Activated naive CD4-positive, alpha-beta T cell treated with anti-CD3 and anti-CD28 coated beads for 36 hours (primary cell): ENCODE measurements at regions of chr13 and their contacts with region 1.

Region 1: DNA sequence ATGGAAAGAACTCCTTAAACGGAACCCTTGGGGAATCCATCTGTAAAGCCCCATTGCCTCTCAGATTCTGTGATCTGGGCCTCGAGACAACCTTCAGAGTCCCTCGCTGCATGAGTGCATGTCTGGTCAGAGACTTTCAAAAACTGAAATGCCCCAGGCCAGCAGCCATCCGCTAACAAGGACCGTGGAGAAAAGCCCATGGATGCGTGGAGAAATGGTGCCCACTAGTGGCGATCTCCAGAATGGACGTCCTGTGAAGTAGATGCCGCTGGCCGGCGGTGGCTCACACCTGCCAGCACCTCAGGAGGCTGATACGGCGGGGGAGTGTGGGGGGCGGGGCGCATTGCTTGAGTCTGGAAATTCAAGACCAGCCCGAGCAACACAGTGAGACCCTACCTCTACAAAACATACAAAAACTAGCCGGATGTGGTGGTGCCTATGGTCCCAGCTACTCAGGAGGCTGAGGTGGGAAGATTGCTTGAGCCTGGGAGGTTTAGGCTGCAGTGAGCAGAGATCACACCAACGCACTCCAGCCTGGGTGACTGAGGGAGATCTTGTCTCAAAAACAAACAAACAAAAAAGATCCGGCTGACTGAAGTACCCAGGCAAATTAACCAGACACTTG is 7.9 kb upstream of the CDC16 start:
- DNase-seq: peak; percentile 95
- H3K4me3 Mint-ChIP-seq: peak overlapping the region; percentile 38
- H3K27ac Mint-ChIP-seq: peak overlapping the region; percentile 63
- H3K4me1 Mint-ChIP-seq: peaks cover 52% of the 10 kb centered on the region
- H3K27me3 Mint-ChIP-seq: no peaks in the 10 kb centered on the region

Region 2: DNA sequence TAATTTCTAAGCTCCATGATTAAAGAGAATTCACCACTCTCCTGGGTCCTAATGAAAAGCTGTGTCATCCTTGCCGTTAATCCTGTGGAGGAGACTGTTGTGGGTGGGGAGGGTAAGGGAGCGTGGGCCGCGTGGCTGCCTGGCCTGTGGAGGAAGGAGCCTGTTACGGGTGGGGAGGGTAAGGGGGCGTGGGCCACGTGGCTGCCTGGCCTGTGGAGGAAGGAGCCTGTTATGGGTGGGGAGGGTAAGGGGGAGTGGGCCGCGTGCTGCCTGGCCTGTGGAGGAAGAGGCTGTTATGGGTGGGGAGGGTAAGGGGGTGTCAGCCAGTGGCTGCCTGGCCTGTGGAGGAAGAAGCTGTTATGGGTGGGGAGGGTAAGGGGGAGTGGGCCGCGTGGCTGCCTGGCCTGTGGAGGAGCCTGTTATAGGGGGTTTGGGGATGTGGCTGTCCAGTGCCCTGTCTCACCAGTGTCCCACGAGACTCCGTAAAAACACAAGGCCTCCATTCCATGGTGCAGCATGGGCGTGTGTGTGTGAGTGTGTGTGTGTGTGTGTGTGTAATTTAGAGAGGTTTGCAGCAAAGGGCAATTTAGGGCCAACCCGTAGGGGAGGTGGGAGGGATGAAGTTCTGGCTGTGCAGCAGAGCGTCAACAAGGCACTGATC is 720.7 kb before region 1 on chr13:
- CTCF ChIA-PET with region 1: no interaction called
- intact Hi-C with region 1: no loop called
- DNase-seq: no peak
- H3K4me3 Mint-ChIP-seq: no peak overlapping the region
- H3K27ac Mint-ChIP-seq: no peak overlapping the region
- H3K4me1 Mint-ChIP-seq: no peaks in the 10 kb centered on the region
- H3K27me3 Mint-ChIP-seq: no peaks in the 10 kb centered on the region

Region 3: DNA sequence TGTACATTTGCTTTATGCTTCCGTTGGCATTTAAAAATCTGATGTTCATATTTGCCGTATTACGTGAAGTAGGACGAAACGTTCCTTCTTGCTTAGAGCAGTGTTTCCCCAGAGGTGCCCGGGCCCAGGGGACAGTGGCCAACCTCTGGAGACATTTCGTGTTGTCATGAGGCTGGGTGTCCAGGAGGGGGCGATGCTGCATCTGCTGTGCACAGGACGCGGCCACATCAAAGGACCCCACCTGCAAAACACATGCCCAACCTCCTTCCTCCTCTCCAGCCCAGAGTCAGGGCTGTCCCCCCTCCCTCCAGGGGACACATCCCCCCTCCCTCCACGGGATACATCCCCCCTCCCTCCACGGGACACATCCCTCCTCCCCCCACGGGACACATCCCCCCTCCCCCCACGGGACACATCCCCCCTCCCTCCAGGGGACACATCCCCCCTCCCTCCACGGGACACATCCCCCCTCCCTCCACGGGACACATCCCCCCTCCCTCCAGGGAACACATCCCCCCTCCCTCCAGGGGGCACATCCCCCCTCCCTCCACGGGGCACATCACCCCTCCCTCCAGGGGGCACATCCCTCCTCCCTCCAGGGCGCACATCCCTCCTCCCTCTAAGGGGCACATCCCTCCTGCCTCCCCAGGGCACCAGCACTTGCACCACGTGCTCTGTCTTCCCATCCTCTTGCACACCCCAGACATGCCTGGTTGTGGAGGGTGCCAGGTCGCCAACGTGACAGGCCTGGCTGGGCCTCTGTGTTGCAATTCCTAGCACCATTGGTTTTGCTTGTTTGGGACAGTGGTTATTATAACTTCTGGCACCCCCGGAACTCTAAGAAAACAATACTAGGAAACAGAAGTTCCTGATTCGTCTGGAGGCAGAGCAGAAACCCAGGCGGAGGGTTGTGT is 409.6 kb before region 1 on chr13:
- CTCF ChIA-PET with region 1: interaction called, 3 read pairs
- intact Hi-C with region 1: loop called (anchors 1 kb)
- DNase-seq: peak; percentile 94
- H3K4me3 Mint-ChIP-seq: peak overlapping the region; percentile 91
- H3K27ac Mint-ChIP-seq: no peak overlapping the region
- H3K4me1 Mint-ChIP-seq: peaks cover 21% of the 10 kb centered on the region
- H3K27me3 Mint-ChIP-seq: no peaks in the 10 kb centered on the region

Region 4: GRCh38 chr13:113951246-113951999 is 275.4 kb before region 1 on chr13:
- CTCF ChIA-PET with region 1: interaction called, 8 read pairs
- intact Hi-C with region 1: loop called (anchors 1 kb)
- DNase-seq: peak; percentile 80
- H3K4me3 Mint-ChIP-seq: peak overlapping the region; percentile 32
- H3K27ac Mint-ChIP-seq: no peak overlapping the region
- H3K4me1 Mint-ChIP-seq: peaks cover 2% of the 10 kb centered on the region
- H3K27me3 Mint-ChIP-seq: no peaks in the 10 kb centered on the region

Region 5: GRCh38 chr13:114065141-114065925 is 161.5 kb before region 1 on chr13:
- CTCF ChIA-PET with region 1: interaction called, 4 read pairs
- intact Hi-C with region 1: loop called (anchors 2 kb)
- DNase-seq: peak; percentile 90
- H3K4me3 Mint-ChIP-seq: peak overlapping the region; percentile 67
- H3K27ac Mint-ChIP-seq: peak overlapping the region; percentile 95
- H3K4me1 Mint-ChIP-seq: peaks cover 67% of the 10 kb centered on the region
- H3K27me3 Mint-ChIP-seq: no peaks in the 10 kb centered on the region

Region 6: GRCh38 chr13:114128624-114129522 is 97.9 kb before region 1 on chr13:
- CTCF ChIA-PET with region 1: interaction called, 5 read pairs
- intact Hi-C with region 1: loop called (anchors 1 kb)
- DNase-seq: peak; percentile 96
- H3K4me3 Mint-ChIP-seq: peak overlapping the region; percentile 97
- H3K27ac Mint-ChIP-seq: peak overlapping the region; percentile 93
- H3K4me1 Mint-ChIP-seq: peaks cover 57% of the 10 kb centered on the region
- H3K27me3 Mint-ChIP-seq: no peaks in the 10 kb centered on the region

Region 7: DNA sequence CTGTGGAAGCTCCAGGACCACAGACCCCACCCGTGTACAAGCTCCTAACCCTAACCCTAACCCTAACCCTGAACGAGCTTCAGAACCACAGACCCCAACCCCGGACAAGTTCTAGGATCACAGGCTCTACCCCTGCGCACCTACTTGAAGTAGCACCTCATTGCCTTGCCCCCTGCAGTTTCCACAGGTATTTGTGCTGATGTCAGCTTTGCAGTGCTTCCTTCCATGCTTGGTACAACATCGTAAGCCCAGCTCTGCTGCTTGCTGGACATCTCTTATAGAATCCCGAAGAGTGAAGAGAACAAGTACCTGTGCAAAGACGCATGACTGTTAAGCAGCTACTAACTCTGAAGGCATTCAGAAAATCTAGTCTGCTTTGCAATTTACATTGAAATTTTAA is 12.8 kb before region 1 on chr13:
- CTCF ChIA-PET with region 1: interaction called, 10 read pairs
- intact Hi-C with region 1: no loop called
- DNase-seq: no peak
- H3K4me3 Mint-ChIP-seq: no peak overlapping the region
- H3K27ac Mint-ChIP-seq: no peak overlapping the region
- H3K4me1 Mint-ChIP-seq: peaks cover 28% of the 10 kb centered on the region
- H3K27me3 Mint-ChIP-seq: no peaks in the 10 kb centered on the region